HepG2 (cell line): ENCODE measurements at regions of chr7 and their contacts with region 1.

Region 1: DNA sequence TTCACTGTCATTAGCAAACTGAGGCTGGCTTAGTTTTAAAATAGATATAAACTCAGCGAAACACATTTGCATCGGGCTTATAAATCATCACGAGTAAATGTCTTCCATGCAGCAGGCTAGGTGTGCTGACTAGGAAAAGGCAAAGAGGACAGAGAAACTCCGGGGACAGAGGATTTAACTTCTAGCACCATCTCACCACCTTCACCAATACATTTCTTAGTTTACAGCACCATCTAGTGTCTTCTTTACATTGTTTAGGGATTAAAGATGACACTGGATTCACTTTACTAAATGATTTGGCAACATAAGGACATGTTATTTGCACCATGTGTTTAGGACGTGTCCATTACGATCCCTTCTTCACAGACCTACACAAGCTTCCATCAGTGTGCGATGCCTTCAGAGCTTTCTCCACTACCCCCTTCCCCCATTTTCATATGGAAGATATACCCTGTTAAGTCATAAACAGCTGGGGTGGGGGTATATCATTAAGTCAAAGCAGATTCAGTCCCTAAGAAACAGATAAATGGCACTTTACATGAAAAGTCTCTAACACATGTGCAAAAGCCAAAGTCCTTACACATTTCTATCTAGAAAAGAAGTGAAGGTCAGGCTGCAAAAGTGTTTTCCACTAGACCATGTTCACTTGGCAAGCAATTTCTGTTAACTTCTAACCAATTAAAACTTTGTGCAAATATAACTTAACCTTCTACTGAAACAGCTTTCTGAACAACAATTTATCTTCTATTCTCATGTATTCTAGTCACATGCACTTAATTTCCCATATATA is 103.3 kb downstream of the GRB10 start:
- DNase-seq: peak; percentile 60
- ATAC-seq: peak; percentile 81
- H3K4me3 ChIP-seq: no peak overlapping the region
- H3K27ac ChIP-seq: no peak overlapping the region
- H3K4me1 ChIP-seq: peaks cover 37% of the 10 kb centered on the region
- H3K27me3 ChIP-seq: no peaks in the 10 kb centered on the region
- CTCF ChIP-seq: peak; percentile 79
- EP300 ChIP-seq: no peak
- POLR2A ChIP-seq: no peak
- RAD21 ChIP-seq: peak; percentile 57

Region 2: DNA sequence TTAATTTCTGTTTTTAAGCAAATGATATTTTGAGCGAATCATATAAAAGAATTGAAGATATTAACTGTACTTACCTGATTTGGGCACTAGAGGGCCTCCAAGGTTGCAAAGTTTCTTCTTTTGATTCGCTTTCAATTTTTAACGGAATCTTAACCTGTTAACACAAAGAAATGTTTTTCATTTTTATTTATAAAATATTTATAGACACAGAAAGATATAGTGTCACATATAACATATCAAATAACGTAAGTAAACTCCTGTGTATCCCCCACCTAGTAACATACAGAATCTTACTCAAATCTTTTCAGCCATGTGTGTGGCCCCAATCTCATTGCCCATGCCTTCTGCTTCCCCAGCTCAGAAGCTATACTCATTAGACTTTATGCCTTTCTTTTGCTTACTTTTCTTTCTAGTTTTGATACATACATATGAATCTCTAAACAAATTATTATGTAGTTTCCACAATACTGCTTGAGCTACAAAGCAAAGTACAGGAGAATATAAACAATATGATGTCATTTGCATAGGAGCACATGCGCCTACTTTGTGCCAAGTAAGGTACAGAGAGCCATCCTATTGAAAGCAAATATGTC is 536.9 kb before region 1 on chr7:
- CTCF ChIA-PET with region 1: no interaction called
- POLR2A ChIA-PET with region 1: no interaction called
- in situ Hi-C with region 1: loop called (anchors 25 kb)
- intact Hi-C with region 1: loop called (anchors 1 kb)
- DNase-seq: peak; percentile 12
- ATAC-seq: no peak
- H3K4me3 ChIP-seq: no peak overlapping the region
- H3K27ac ChIP-seq: no peak overlapping the region
- H3K4me1 ChIP-seq: no peaks in the 10 kb centered on the region
- H3K27me3 ChIP-seq: no peaks in the 10 kb centered on the region
- CTCF ChIP-seq: peak; percentile 49
- EP300 ChIP-seq: no peak
- POLR2A ChIP-seq: no peak
- RAD21 ChIP-seq: no peak

Region 3: GRCh38 chr7:50560865-50561351 is 118.5 kb before region 1 on chr7:
- CTCF ChIA-PET with region 1: no interaction called
- POLR2A ChIA-PET with region 1: no interaction called
- in situ Hi-C with region 1: no loop called
- intact Hi-C with region 1: loop called (anchors 5 kb)
- DNase-seq: peak; percentile 80
- ATAC-seq: peak; percentile 85
- H3K4me3 ChIP-seq: peak overlapping the region in 1 of 3 experiments; percentile 42; a peak in 2 of 6 replicates
- H3K27ac ChIP-seq: peak overlapping the region; percentile 60
- H3K4me1 ChIP-seq: peaks cover 97% of the 10 kb centered on the region
- H3K27me3 ChIP-seq: no peaks in the 10 kb centered on the region
- CTCF ChIP-seq: peak; percentile 32
- EP300 ChIP-seq: peak in 1 of 2 experiments; percentile 54; a peak in 1 of 4 replicates
- POLR2A ChIP-seq: peak; percentile 52 to 69; a peak in 3 of 4 replicates
- RAD21 ChIP-seq: peak; percentile 44

Region 4: GRCh38 chr7:50614721-50615518 is 64.5 kb before region 1 on chr7:
- CTCF ChIA-PET with region 1: no interaction called
- POLR2A ChIA-PET with region 1: interaction called, 5 read pairs
- in situ Hi-C with region 1: no loop called
- intact Hi-C with region 1: loop called (anchors 5 kb)
- DNase-seq: peak; percentile 74
- ATAC-seq: peak; percentile 87
- H3K4me3 ChIP-seq: peak overlapping the region in 2 of 3 experiments; percentile 9 to 42; a peak in 3 of 6 replicates
- H3K27ac ChIP-seq: peak overlapping the region; percentile 63
- H3K4me1 ChIP-seq: peaks cover 29% of the 10 kb centered on the region
- H3K27me3 ChIP-seq: no peaks in the 10 kb centered on the region
- CTCF ChIP-seq: peak; percentile 78
- EP300 ChIP-seq: peak in 1 of 2 experiments; percentile 77; a peak in 2 of 4 replicates
- POLR2A ChIP-seq: no peak
- RAD21 ChIP-seq: no peak

Region 5: GRCh38 chr7:50721165-50721564 is 41.8 kb after region 1 on chr7:
- CTCF ChIA-PET with region 1: no interaction called
- POLR2A ChIA-PET with region 1: no interaction called
- in situ Hi-C with region 1: no loop called
- intact Hi-C with region 1: no loop called
- DNase-seq: no peak
- ATAC-seq: no peak
- H3K4me3 ChIP-seq: no peak overlapping the region
- H3K27ac ChIP-seq: no peak overlapping the region
- H3K4me1 ChIP-seq: peaks cover 29% of the 10 kb centered on the region
- H3K27me3 ChIP-seq: no peaks in the 10 kb centered on the region
- CTCF ChIP-seq: no peak
- EP300 ChIP-seq: no peak
- POLR2A ChIP-seq: no peak
- RAD21 ChIP-seq: no peak

Region 6: DNA sequence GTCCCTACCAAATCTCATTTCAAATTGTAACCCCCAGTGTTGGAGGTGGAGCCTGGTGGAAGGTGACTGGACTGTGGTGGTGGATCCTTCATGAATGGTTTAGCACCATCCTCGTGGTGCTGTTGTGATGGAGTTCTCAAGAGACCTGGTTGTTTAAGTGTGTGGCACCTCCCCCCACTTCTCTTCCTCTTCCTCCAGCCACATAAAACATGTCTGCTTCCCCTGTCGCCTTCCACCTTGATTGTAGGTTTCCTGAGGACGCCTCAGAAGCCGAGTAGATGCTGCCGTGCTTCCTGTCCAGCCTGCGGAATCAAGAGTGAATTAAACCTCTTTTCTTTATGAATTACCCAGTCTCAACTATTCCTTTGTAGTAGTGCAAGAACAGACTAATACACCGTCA is 82.3 kb after region 1 on chr7:
- CTCF ChIA-PET with region 1: no interaction called
- POLR2A ChIA-PET with region 1: no interaction called
- in situ Hi-C with region 1: no loop called
- intact Hi-C with region 1: no loop called
- DNase-seq: no peak
- ATAC-seq: no peak
- H3K4me3 ChIP-seq: no peak overlapping the region
- H3K27ac ChIP-seq: no peak overlapping the region
- H3K4me1 ChIP-seq: peaks cover 27% of the 10 kb centered on the region
- H3K27me3 ChIP-seq: no peaks in the 10 kb centered on the region
- CTCF ChIP-seq: no peak
- EP300 ChIP-seq: no peak
- POLR2A ChIP-seq: no peak
- RAD21 ChIP-seq: no peak